ENCODE measurements at regions of chr19 and their contacts with region 1.

Region 1: DNA sequence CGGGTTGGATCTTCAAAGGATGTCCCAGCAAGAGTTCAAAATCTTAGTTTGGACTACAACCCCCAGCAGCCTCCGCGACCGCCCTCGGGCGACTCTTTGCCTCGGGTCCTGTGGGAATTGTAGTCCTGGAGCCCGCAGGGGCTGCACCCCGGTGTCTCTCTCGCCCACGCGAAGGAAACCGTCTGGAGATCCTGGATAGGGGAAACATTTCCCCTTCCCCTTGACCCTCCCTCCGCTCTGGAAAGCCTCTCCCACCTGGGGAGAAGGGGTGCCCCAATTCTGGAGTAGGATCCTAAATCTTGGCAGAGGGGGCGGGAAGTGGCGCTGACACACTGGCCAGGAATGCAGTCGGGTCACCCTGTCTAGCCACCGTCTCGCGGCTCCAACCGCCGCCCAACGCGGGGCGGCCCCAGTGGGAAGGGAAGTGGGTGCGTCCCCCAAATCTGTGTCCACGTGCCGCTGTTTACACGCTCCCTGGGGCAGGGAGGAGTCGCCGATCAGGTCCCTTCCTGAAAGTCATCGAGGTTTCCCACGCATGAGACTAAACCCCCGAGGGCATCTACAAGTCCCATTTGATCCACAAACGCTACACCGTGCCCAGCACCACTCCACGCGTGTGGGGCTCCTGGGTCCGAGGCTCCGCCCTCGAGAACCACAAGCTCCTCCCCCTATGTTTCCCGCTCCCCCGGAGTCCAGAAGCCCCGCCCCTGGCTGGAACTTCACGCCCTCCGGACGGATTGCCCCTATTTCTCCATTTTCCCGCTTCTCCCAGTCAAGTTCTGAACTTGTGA is 761 bp upstream of the PPP1R13L start:
- H3K4me3 ChIP-seq: peak overlapping the region; percentile 82
- H3K27ac ChIP-seq: peak overlapping the region; percentile 96
- H3K4me1 ChIP-seq: 0 out of 2 replicates have a peak, but pooled peaks cover 7% of the 10 kb centered on the region
- CTCF ChIP-seq: no peak

Region 2: DNA sequence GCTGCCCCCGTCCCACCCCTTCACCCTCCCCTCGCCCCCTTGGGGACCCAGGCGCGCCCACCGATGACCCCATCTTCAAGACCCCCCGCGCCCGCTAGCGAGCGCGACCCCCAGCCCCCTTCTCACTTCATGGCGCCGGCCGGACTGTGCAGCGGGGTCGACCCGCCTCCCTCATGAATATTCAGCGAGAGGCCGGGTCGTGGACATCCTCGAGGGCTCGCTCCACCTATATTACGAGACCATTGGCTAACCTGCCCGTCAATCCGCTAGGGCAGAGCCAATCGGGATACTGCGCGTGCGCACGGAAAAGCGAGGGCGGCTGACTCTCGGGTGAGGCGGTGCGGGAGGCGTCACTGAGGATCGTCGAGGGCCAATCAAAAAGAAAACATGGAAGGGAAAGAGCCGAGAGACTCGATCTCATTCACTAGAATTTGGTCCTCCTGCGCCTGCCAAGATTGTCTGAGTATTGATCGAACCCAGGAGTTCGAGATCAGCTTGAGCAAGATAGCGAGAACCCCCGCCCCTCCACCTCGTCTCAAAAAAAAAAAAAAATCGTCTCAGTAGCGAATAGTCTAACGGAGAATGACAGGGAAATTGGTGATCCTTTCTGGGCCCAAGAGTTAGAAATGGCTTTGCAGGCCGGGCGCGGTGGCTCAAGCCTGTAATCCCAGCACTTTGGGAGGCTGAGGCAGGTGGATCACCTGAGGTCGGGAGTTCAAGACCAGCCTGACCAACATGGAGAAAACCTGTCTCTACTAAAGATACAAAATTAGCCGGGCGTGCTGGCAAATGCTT is 35.0 kb before region 1 on chr19 and contains the start of gene ERCC2:
- CTCF ChIA-PET with region 1: interaction called, 18 read pairs
- POLR2A ChIA-PET with region 1: interaction called, 4 read pairs
- H3K4me3 ChIP-seq: peak within 1 kb of the TSS; percentile 77
- H3K27ac ChIP-seq: peak within 1 kb of the TSS; percentile 82
- H3K4me1 ChIP-seq: 0 out of 2 replicates have a peak, but pooled peaks cover 2% of the 10 kb centered on the region
- CTCF ChIP-seq: no peak; the same call in 1 of the 2 replicates

Region 3: GRCh38 chr19:45391340-45391739 is 14.3 kb before region 1 on chr19:
- CTCF ChIA-PET with region 1: interaction called, 28 read pairs
- POLR2A ChIA-PET with region 1: interaction called, 3 read pairs
- H3K4me3 ChIP-seq: no peak overlapping the region
- H3K27ac ChIP-seq: no peak overlapping the region
- H3K4me1 ChIP-seq: no peaks in the 10 kb centered on the region
- CTCF ChIP-seq: no peak

Region 4: GRCh38 chr19:45423589-45424190 is 18.1 kb after region 1 on chr19 and contains the start of gene ERCC1:
- CTCF ChIA-PET with region 1: interaction called, 13 read pairs
- POLR2A ChIA-PET with region 1: interaction called, 7 read pairs
- H3K4me3 ChIP-seq: peak within 1 kb of the TSS; percentile 50
- H3K27ac ChIP-seq: peak within 1 kb of the TSS; percentile 88
- H3K4me1 ChIP-seq: peaks cover 10% of the 10 kb centered on the region
- CTCF ChIP-seq: no peak

Measured in HEK293 (cell line).